PC-3 (cell line): ENCODE measurements at regions of chr3 and their contacts with region 1.

Region 1: GRCh38 chr3:132210476-132211346 is 106.5 kb upstream of the ACP3 start:
- DNase-seq: peak; percentile 65
- ATAC-seq: peak; percentile 61
- H3K4me3 ChIP-seq: no peak overlapping the region
- H3K27ac ChIP-seq: no peak overlapping the region
- H3K4me1 ChIP-seq: peaks cover 6% of the 10 kb centered on the region
- H3K27me3 ChIP-seq: no peaks in the 10 kb centered on the region
- CTCF ChIP-seq: peak; percentile 84

Region 2: DNA sequence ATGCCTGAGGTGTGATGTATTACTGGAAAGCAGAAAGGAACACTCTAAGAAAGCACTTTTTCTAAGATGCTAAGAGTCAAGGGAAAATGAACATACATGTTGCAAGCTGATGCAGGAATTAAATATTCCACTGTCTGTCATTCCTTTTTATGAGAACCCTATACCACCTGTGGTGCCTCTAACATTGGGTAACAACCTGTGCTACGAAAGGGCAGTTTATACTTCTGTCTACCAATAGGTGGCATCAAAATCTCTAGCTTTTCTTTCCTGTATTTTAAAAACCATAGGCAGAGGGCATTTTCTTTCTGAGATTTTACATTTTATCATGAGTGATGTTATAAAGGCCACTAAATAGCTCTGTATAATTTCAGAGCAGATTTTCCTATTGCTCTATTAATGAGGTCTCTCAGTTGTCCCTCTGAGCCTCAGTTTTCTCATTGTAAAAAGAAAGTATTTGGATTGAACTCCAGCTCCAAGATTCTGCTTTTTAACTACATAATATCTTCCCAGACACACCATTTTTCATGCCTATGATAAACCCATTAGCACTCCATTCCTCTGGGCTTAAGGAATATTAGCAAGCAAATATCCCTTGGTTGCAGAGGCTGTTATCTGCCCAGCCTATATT is 172.4 kb before region 1 on chr3:
- CTCF ChIA-PET with region 1: no interaction called
- POLR2A ChIA-PET with region 1: no interaction called
- intact Hi-C with region 1: loop called (anchors 1 kb)
- DNase-seq: peak; percentile 60
- ATAC-seq: peak; percentile 67
- H3K4me3 ChIP-seq: no peak overlapping the region
- H3K27ac ChIP-seq: no peak overlapping the region
- H3K4me1 ChIP-seq: no peaks in the 10 kb centered on the region
- H3K27me3 ChIP-seq: no peaks in the 10 kb centered on the region
- CTCF ChIP-seq: peak; percentile 75